ENCODE measurements at regions of chr15 and their contacts with region 1.

Region 1: DNA sequence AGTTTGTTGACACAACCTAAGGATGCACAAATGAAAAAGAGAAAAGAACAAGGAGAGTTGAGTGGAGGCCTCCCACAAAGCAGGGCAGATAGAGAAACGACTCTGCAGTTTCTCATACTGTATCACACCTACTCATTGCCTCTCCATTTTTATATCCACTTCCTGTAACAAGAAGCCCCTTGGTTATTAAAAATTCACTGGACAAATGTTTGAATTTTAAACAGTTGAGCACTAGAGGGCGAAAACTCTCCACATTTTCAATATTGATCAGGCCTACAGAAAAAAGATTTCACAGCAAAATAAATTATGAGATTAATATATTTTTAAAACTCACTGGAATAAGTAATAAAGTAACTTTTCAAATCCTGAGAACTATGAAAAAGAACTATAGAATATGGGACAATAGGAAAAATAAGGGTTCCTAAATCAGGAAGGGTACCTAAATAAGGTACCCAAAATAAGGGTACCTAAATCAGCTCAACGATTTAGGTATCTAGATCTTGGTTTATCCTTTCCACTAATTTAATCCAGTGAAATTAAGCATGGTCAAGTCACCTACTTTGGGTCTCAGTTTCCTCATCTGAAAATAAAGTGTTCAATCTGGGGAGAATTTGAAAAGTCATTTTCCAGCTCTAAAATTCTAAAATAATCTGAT is 47.0 kb upstream of the PPIB start:
- DNase-seq: no peak
- ATAC-seq: no peak
- H3K4me3 ChIP-seq: no peak overlapping the region
- H3K27ac ChIP-seq: no peak overlapping the region
- H3K4me1 ChIP-seq: no peaks in the 10 kb centered on the region
- H3K27me3 ChIP-seq: no peaks in the 10 kb centered on the region
- CTCF ChIP-seq: peak in 4 of 5 experiments; percentile 23 to 43 (median 29)
- POLR2A ChIP-seq: no peak

Region 2: GRCh38 chr15:64058279-64058678 is 151.5 kb before region 1 on chr15:
- in situ Hi-C with region 1: no loop called
- intact Hi-C with region 1: no loop called
- DNase-seq: no peak
- ATAC-seq: no peak
- H3K4me3 ChIP-seq: no peak overlapping the region
- H3K27ac ChIP-seq: no peak overlapping the region
- H3K4me1 ChIP-seq: no peaks in the 10 kb centered on the region
- H3K27me3 ChIP-seq: no peaks in the 10 kb centered on the region
- CTCF ChIP-seq: no peak
- POLR2A ChIP-seq: no peak

Region 3: DNA sequence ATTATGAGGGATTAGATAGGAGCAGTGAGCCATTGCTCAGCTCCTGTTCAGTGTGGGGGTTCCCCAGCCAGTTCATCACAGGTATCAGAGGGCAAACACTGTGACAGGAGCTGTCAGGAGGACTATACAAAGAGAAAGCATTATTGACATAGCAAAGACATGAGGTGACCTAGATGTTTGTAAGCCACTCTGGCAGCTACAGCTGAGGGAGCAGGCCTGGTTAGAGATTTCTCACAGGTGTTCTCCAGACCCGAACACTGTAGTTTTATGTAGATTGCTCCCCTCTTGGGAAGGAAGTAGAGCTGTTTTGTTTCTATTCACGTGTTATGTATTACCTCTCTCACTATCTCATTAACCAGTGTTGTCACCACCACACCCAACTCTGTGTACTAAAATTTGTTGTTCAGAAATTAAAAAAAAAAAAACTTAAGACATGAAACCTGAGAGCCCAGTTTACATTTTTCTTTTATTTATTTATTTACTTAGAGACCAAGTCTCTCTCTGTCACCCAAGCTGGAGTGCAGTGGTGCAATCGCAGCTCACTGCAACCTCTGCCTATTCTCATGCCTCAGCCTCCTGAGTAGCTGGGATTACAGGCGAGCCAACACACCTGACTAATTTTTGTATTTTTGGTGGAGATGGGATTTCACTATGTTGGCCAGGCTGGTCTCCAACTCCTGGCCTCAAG is 441.9 kb after region 1 on chr15:
- in situ Hi-C with region 1: loop called in 2 of 4 experiments (anchors 10 to 25 kb)
- intact Hi-C with region 1: no loop called
- DNase-seq: peak; percentile 12 to 50
- ATAC-seq: peak; percentile 75 to 84
- H3K4me3 ChIP-seq: no peak overlapping the region
- H3K27ac ChIP-seq: peak overlapping the region in 3 of 4 donors; percentile 23 to 50 (median 35)
- H3K4me1 ChIP-seq: peaks cover 5 to 9% of the 10 kb centered on the region in 2 donors
- H3K27me3 ChIP-seq: no peaks in the 10 kb centered on the region
- CTCF ChIP-seq: no peak
- POLR2A ChIP-seq: no peak